B cell (primary cell): ENCODE measurements at regions of chr3 and their contacts with region 1.

Region 1: DNA sequence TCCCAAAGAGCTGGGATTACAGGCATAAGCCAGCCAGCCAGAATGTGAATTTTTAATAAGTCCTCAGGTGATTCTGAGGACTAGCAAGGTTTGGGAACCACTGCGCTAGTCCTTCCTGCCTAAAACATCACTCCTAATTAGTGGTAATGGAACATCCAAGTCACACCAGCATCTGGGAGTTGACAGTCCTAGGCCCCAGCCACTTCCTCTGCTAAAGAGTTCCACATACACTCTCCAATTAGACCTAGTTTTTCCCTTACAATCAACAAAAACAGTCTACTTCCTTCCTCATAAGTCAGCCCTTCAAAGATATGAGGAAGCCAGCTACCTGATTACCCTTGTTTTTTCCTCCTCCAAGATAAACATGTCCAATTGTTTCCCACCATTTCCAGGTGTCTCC is 78.1 kb downstream of the OXNAD1 start:
- DNase-seq: no peak
- ATAC-seq: no peak
- H3K4me3 ChIP-seq: no peak overlapping the region
- H3K4me3 Mint-ChIP-seq: no peak overlapping the region
- H3K27ac ChIP-seq: peak overlapping the region in 1 of 2 donors; percentile 1
- H3K27ac Mint-ChIP-seq: no peak overlapping the region
- H3K4me1 ChIP-seq: peaks cover 19 to 26% of the 10 kb centered on the region in 2 donors
- H3K4me1 Mint-ChIP-seq: peaks cover 31% of the 10 kb centered on the region
- H3K27me3 ChIP-seq: no peaks in the 10 kb centered on the region
- H3K27me3 Mint-ChIP-seq: no peaks in the 10 kb centered on the region
- CTCF ChIP-seq: no peak

Region 2: DNA sequence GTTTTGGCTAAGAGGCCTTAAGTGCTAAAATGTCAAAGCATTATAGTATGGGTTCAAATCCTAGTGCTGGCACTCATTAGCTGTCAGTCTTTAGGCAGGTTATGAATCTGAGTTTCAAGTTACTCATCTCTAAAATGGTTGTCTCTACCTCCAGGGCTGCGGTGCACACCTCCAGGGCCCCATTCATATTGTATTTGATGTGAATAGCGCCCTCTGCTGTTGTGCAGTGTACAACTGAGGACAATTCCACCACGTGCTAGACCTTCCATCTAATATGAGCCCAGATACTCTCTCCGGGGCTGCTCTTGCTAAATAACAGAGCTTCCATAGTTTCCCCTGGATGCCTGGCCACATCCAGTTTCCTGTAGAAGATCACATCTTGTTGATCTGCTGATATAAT is 23.8 kb before region 1 on chr3:
- CTCF ChIA-PET with region 1: interaction called, 3 read pairs
- POLR2A ChIA-PET with region 1: no interaction called
- intact Hi-C with region 1: loop called (anchors 2 kb)
- DNase-seq: peak; percentile 43
- ATAC-seq: no peak
- H3K4me3 ChIP-seq: no peak overlapping the region
- H3K4me3 Mint-ChIP-seq: no peak overlapping the region
- H3K27ac ChIP-seq: no peak overlapping the region
- H3K27ac Mint-ChIP-seq: no peak overlapping the region
- H3K4me1 ChIP-seq: no peaks in the 10 kb centered on the region
- H3K4me1 Mint-ChIP-seq: no peaks in the 10 kb centered on the region
- H3K27me3 ChIP-seq: no peaks in the 10 kb centered on the region
- H3K27me3 Mint-ChIP-seq: no peaks in the 10 kb centered on the region
- CTCF ChIP-seq: peak; percentile 43

Region 3: GRCh38 chr3:16606398-16606797 is 263.3 kb after region 1 on chr3:
- CTCF ChIA-PET with region 1: no interaction called
- POLR2A ChIA-PET with region 1: no interaction called
- intact Hi-C with region 1: no loop called
- DNase-seq: no peak
- ATAC-seq: no peak
- H3K4me3 ChIP-seq: no peak overlapping the region
- H3K4me3 Mint-ChIP-seq: no peak overlapping the region
- H3K27ac ChIP-seq: no peak overlapping the region
- H3K27ac Mint-ChIP-seq: no peak overlapping the region
- H3K4me1 ChIP-seq: peaks cover 0 to 3% of the 10 kb centered on the region in 2 donors
- H3K4me1 Mint-ChIP-seq: peaks cover 3% of the 10 kb centered on the region
- H3K27me3 ChIP-seq: peaks cover 0 to 3% (median 1%) of the 10 kb centered on the region in 4 experiments
- H3K27me3 Mint-ChIP-seq: peaks cover 2% of the 10 kb centered on the region
- CTCF ChIP-seq: no peak